GM12878 (cell line): ENCODE measurements at regions of chr7 and their contacts with region 1.

Region 1: GRCh38 chr7:105156731-105157130 is 142.7 kb downstream of the KMT2E start:
- DNase-seq: no peak
- ATAC-seq: no peak
- H3K4me3 ChIP-seq: no peak overlapping the region
- H3K27ac ChIP-seq: no peak overlapping the region
- H3K4me1 ChIP-seq: no peaks in the 10 kb centered on the region
- H3K27me3 ChIP-seq: no peaks in the 10 kb centered on the region
- CTCF ChIP-seq: no peak
- EP300 ChIP-seq: no peak
- POLR2A ChIP-seq: no peak
- RAD21 ChIP-seq: no peak

Region 2: GRCh38 chr7:105106473-105106872 is 50.3 kb before region 1 on chr7:
- CTCF ChIA-PET with region 1: no interaction called
- POLR2A ChIA-PET with region 1: no interaction called
- RAD21 ChIA-PET with region 1: no interaction called
- SMC1A ChIA-PET with region 1: no interaction called
- in situ Hi-C with region 1: no loop called
- intact Hi-C with region 1: no loop called
- DNase-seq: no peak
- ATAC-seq: no peak
- H3K4me3 ChIP-seq: no peak overlapping the region
- H3K27ac ChIP-seq: no peak overlapping the region
- H3K4me1 ChIP-seq: peaks cover 6% of the 10 kb centered on the region; the same call in 1 of the 2 replicates
- H3K27me3 ChIP-seq: no peaks in the 10 kb centered on the region
- CTCF ChIP-seq: no peak
- EP300 ChIP-seq: no peak
- POLR2A ChIP-seq: no peak
- RAD21 ChIP-seq: no peak

Region 3: GRCh38 chr7:105336009-105336408 is 179.3 kb after region 1 on chr7:
- CTCF ChIA-PET with region 1: interaction called, 13 read pairs
- POLR2A ChIA-PET with region 1: no interaction called
- RAD21 ChIA-PET with region 1: interaction called, 5 read pairs
- SMC1A ChIA-PET with region 1: interaction called, 25 read pairs
- in situ Hi-C with region 1: no loop called
- intact Hi-C with region 1: loop called (anchors 5 kb)
- DNase-seq: no peak
- ATAC-seq: no peak
- H3K4me3 ChIP-seq: no peak overlapping the region
- H3K27ac ChIP-seq: no peak overlapping the region
- H3K4me1 ChIP-seq: no peaks in the 10 kb centered on the region
- H3K27me3 ChIP-seq: no peaks in the 10 kb centered on the region
- CTCF ChIP-seq: peak in 2 of 3 experiments; percentile 26 to 49; a peak in 2 of 6 replicates
- EP300 ChIP-seq: no peak
- POLR2A ChIP-seq: no peak
- RAD21 ChIP-seq: peak; percentile 26; the same call in 1 of the 2 replicates

Region 4: DNA sequence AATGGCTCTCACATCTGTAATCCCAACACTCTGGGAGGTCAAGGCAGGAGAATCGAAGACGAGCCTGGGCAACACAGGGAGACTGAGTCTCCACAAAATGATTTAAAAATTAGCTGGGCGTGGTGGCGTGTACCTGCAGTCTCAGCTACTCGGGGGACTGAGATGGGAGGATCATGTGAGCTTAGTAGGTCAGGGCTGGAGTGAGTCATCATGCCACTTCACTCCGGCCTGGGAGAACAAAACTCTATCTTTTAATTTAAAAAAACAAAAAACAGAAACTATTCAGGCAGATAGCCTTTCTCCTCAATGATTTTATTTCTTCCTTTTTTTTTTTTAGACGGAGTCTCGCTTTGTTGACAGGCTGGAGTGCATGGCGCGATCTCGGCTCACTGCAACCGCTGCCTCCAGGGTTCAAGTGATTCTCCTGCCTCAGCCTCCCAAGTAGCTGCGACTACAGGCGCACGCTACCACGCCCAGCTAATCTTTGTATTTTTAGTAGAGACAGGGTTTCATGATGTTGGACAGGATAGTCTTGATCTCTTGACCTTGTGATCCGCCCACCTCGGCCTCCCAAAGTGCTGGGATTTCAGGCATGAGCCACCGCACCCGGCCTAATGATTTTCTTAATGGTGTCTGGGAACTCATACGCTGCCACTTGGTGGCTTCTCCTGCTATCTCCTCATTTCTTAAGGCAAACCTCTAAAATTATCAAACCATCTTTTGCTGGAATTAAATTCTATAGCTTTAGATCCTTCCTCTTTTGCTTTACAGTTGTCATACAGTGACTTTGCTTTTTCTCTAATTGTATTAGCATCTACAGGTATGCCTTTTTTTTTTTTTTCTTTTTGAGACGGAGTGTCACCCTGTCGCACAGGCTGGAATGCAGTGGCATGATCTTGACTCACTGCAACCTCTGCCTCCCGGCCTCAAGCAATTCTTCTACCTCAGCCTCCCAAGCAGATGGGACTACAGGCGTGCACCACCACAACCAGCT is 209.1 kb after region 1 on chr7:
- CTCF ChIA-PET with region 1: no interaction called
- POLR2A ChIA-PET with region 1: no interaction called
- RAD21 ChIA-PET with region 1: no interaction called
- SMC1A ChIA-PET with region 1: no interaction called
- in situ Hi-C with region 1: no loop called
- intact Hi-C with region 1: no loop called
- DNase-seq: no peak
- ATAC-seq: no peak
- H3K4me3 ChIP-seq: no peak overlapping the region
- H3K27ac ChIP-seq: no peak overlapping the region
- H3K4me1 ChIP-seq: no peaks in the 10 kb centered on the region
- H3K27me3 ChIP-seq: no peaks in the 10 kb centered on the region
- CTCF ChIP-seq: no peak
- EP300 ChIP-seq: no peak
- POLR2A ChIP-seq: no peak
- RAD21 ChIP-seq: no peak

Region 5: GRCh38 chr7:105429746-105430612 is 273.2 kb after region 1 on chr7:
- CTCF ChIA-PET with region 1: interaction called, 18 read pairs
- POLR2A ChIA-PET with region 1: no interaction called
- RAD21 ChIA-PET with region 1: interaction called, 8 read pairs
- SMC1A ChIA-PET with region 1: interaction called, 7 read pairs
- in situ Hi-C with region 1: no loop called
- intact Hi-C with region 1: loop called (anchors 2 kb)
- DNase-seq: no peak
- ATAC-seq: peak; percentile 88
- H3K4me3 ChIP-seq: no peak overlapping the region
- H3K27ac ChIP-seq: no peak overlapping the region
- H3K4me1 ChIP-seq: no peaks in the 10 kb centered on the region
- H3K27me3 ChIP-seq: no peaks in the 10 kb centered on the region
- CTCF ChIP-seq: peak; percentile 46 to 66 (median 56)
- EP300 ChIP-seq: no peak
- POLR2A ChIP-seq: no peak
- RAD21 ChIP-seq: peak; percentile 76